Activated T-helper 1 cell treated with anti-CD3 and anti-CD28 coated beads, Interleukin-12 subunit alpha, Interleukin-12 subunit beta, Interleukin-2, Interleukin-4 antibody, amounts not matched to agents 30 ng/mL and 10 ng/mL and 1 ng/mL, durations not matched to agents 14 hours and 24 hours and 36 hours (primary cell): ENCODE measurements at regions of chr1 and their contacts with region 1.

Region 1: GRCh38 chr1:184754476-184755225 is at the start of gene EDEM3:
- DNase-seq: peak; percentile 97
- H3K4me3 Mint-ChIP-seq: peak within 1 kb of the TSS; percentile 89
- H3K27ac Mint-ChIP-seq: peak within 1 kb of the TSS; percentile 77
- H3K4me1 Mint-ChIP-seq: peaks cover 29% of the 10 kb centered on the region
- H3K27me3 Mint-ChIP-seq: peaks cover 5% of the 10 kb centered on the region
- total RNA-seq, gene EDEM3: 23.8 and 28.5 TPM in 2 replicates

Region 2: DNA sequence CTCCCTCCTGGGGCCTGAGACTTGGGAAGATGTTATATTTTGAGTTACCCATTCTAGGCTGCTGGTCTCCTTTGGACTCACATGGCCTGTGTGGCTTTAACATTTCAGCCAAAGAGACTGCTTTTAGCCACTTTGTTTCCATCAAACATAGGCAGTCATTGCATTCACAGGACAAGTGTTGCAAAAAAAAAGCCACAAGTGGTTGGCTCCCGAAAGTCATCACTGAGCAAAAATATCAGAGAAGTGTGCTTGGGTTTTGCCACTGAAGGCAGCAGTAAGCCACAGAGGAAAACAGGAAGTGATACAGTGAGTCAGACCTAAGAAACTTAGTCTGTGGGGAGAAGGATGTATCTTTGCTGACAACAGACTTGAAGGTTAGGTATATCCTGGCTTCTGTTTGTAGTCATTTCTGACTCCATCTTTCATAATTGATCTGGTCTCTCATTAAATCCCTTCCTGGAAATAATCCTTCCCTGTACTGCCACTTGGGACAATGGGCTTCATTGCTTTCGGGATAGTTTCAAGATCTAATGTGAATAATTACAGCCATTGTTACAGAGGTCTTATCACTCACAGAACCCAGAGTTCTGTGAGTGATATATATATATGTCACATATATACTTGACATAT is 798.0 kb before region 1 on chr1:
- intact Hi-C with region 1: loop called (anchors 5 kb)
- DNase-seq: peak; percentile 69
- H3K4me3 Mint-ChIP-seq: peak overlapping the region; percentile 62
- H3K27ac Mint-ChIP-seq: no peak overlapping the region
- H3K4me1 Mint-ChIP-seq: peaks cover 14% of the 10 kb centered on the region
- H3K27me3 Mint-ChIP-seq: no peaks in the 10 kb centered on the region

Region 3: DNA sequence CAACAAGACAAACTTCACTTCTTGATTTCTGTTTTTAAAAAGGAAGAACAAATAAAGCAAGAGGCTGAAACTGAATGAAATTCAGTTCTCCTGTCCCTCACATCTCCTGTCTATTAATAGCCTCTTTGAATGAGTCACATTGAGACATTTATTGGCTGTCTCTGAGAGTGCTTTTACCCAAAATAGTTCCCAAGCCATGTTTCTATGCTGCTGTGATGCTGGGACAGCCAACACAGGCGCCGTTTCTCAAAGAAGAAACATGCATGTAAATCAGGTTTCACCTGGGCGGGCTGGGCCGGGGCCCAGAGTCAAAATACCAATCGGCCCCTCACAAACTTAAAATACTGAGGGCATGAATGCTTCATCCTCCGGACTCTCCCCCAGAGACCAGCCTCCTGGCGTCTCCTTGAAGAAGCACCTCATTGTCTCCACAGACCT is 105.2 kb before region 1 on chr1:
- intact Hi-C with region 1: no loop called
- DNase-seq: no peak
- H3K4me3 Mint-ChIP-seq: no peak overlapping the region
- H3K27ac Mint-ChIP-seq: no peak overlapping the region
- H3K4me1 Mint-ChIP-seq: no peaks in the 10 kb centered on the region
- H3K27me3 Mint-ChIP-seq: peaks cover 2% of the 10 kb centered on the region

Region 4: GRCh38 chr1:184724843-184725242 is 29.8 kb before region 1 on chr1:
- intact Hi-C with region 1: no loop called
- DNase-seq: no peak
- H3K4me3 Mint-ChIP-seq: no peak overlapping the region
- H3K27ac Mint-ChIP-seq: no peak overlapping the region
- H3K4me1 Mint-ChIP-seq: no peaks in the 10 kb centered on the region
- H3K27me3 Mint-ChIP-seq: no peaks in the 10 kb centered on the region

Region 5: GRCh38 chr1:184743062-184743756 is 11.4 kb before region 1 on chr1:
- intact Hi-C with region 1: loop called (anchors 1 kb)
- DNase-seq: no peak
- H3K4me3 Mint-ChIP-seq: no peak overlapping the region
- H3K27ac Mint-ChIP-seq: peak overlapping the region; percentile 34
- H3K4me1 Mint-ChIP-seq: peaks cover 39% of the 10 kb centered on the region
- H3K27me3 Mint-ChIP-seq: no peaks in the 10 kb centered on the region

Region 6: DNA sequence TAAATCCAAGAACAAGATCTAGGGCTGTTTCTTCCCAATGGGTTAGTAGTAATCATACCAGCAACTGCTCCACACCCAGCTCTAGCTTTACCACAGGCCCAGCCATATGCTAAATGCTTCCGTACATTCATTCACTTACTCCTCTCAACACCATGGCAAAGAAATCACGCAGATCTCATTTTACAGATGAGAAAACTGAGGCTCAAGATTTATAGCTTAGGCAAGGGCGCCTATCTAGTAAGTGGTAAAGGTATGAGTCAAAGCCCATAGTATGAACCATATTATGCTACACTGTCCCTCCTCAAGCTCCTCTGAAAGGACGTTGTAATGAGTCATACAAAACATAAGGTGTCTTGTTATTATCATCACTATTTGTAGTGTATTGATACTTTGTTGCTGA is 137.5 kb after region 1 on chr1:
- intact Hi-C with region 1: loop called (anchors 5 kb)
- DNase-seq: no peak
- H3K4me3 Mint-ChIP-seq: no peak overlapping the region
- H3K27ac Mint-ChIP-seq: peak overlapping the region; percentile 61
- H3K4me1 Mint-ChIP-seq: peaks cover 39% of the 10 kb centered on the region
- H3K27me3 Mint-ChIP-seq: no peaks in the 10 kb centered on the region

Region 7: GRCh38 chr1:185439727-185440415 is 685.2 kb after region 1 on chr1:
- intact Hi-C with region 1: loop called (anchors 10 kb)
- DNase-seq: peak; percentile 44
- H3K4me3 Mint-ChIP-seq: no peak overlapping the region
- H3K27ac Mint-ChIP-seq: no peak overlapping the region
- H3K4me1 Mint-ChIP-seq: peaks cover 27% of the 10 kb centered on the region
- H3K27me3 Mint-ChIP-seq: no peaks in the 10 kb centered on the region

Region 8: GRCh38 chr1:186375088-186375953 is 1620.7 kb after region 1 on chr1 and contains the starts of genes ODR4 and TPR:
- intact Hi-C with region 1: loop called (anchors 2 kb)
- DNase-seq: peak; percentile 96
- H3K4me3 Mint-ChIP-seq: peak within 1 kb of the TSS; percentile 100
- H3K27ac Mint-ChIP-seq: peak within 1 kb of the TSS; percentile 96
- H3K4me1 Mint-ChIP-seq: peaks cover 59% of the 10 kb centered on the region
- H3K27me3 Mint-ChIP-seq: peaks cover 4% of the 10 kb centered on the region
- total RNA-seq, gene ODR4: 15.5 and 17.7 TPM in 2 replicates
- total RNA-seq, gene TPR: 174 and 179 TPM in 2 replicates